Left ventricle myocardium inferior (tissue), 1 donor: ENCODE measurements at regions of chr10 and their contacts with region 1.

Region 1: GRCh38 chr10:80064120-80064886 is 14.2 kb upstream of the TMEM254 start:
- DNase-seq: no peak
- H3K4me3 ChIP-seq: no peak overlapping the region
- H3K27ac ChIP-seq: peak overlapping the region; percentile 66
- H3K4me1 ChIP-seq: peaks cover 5% of the 10 kb centered on the region
- H3K27me3 ChIP-seq: no peaks in the 10 kb centered on the region
- CTCF ChIP-seq: no peak

Region 2: DNA sequence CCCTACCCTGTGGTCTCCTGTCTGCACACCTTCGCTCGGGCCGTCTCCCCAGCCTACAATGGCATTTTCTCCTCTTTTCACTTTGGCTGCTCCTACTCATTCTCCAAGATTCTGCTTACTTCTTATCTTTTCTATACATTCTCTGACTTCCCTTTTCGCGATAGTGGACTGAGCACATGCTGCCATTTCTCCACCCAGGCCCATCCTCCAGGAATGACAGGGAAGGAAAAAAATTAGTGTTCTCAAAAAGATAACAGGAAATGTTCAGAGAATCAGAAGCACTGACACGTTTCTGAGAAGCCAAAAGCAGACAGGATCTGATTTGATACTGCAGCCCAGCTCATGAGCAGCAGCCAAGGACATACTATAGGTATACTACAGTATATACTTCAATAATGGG is 147.5 kb after region 1 on chr10:
- intact Hi-C with region 1: loop called (anchors 10 kb)
- DNase-seq: no peak
- H3K4me3 ChIP-seq: no peak overlapping the region
- H3K27ac ChIP-seq: no peak overlapping the region
- H3K4me1 ChIP-seq: peaks cover 15% of the 10 kb centered on the region
- H3K27me3 ChIP-seq: no peaks in the 10 kb centered on the region
- CTCF ChIP-seq: no peak